Posterior vena cava (tissue), 2 donors: ENCODE measurements at regions of chr11 and their contacts with region 1.

Region 1: GRCh38 chr11:110160016-110160415 is 66.8 kb downstream of the ZC3H12C start:
- DNase-seq: no peak

Region 2: DNA sequence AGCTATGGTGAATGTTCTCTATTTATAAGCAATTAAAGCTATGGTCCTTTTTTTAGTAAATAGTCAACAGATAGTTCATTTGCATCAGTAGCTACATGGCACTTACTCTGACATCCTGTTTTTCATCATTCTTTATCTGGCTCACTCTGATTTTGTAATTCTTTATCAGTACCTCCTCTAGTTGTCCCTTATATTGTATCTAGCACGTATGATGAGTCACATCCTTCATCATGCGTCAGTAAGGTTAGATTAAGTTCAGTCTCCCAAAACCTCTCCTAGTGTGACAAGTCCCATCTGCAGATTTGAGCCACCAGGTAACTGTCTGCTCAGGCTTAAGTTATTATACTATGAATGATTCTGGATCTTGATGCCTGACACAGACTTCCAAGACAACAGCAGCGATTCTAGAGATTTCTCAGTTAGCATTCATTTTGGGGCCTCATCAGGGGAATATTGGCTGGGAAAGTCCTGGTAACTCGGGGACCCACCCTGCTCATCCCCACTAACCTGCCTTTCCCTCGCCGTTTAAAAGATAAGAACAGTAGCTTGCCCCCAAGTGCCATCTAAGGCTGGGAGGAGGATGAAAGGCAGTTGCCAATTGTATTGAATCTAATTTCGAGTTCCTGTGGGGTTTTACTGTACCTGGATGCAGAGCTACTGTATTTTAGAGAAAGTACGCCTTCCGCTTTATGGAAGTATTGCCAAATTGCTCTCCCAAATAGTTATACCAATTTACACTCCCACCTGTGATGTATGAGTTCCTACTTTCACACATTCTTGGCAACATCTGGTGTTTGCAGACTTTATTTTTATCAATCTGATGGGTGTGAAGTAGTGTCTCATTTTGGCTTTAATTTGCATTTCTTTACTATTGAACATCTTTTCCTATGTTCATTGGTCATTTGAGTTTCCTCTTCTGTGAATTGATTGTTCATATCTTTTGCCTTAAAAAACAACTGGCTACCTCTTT is 11.0 kb before region 1 on chr11:
- intact Hi-C with region 1: loop called in 1 of 2 experiments (anchors 1 kb)
- DNase-seq: no peak

Region 3: GRCh38 chr11:110219011-110219785 is 59.2 kb after region 1 on chr11:
- intact Hi-C with region 1: no loop called
- DNase-seq: no peak

Region 4: DNA sequence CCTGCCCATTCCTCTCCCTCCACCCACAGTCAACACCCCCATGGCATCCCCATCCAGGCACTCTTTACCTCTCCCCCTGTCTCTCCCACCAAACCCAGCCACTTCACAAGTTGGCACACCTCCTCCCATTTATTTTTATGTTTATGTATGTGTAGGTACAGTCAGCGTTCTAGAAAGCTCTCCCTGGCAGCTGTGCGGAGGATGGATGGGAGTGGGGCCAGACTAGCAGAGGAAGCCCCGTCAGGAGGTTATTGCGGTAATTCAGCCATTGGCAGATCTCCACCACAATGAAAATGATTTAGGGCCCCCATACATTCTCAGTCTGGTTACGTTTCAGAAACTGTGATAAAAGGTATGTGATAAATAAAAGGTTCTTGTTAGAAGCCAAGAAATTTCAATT is 1300.8 kb after region 1 on chr11:
- intact Hi-C with region 1: loop called in 1 of 2 experiments (anchors 5 kb)
- DNase-seq: no peak